GM12878 (cell line): ENCODE measurements at regions of chr16 and their contacts with region 1.

Region 1: DNA sequence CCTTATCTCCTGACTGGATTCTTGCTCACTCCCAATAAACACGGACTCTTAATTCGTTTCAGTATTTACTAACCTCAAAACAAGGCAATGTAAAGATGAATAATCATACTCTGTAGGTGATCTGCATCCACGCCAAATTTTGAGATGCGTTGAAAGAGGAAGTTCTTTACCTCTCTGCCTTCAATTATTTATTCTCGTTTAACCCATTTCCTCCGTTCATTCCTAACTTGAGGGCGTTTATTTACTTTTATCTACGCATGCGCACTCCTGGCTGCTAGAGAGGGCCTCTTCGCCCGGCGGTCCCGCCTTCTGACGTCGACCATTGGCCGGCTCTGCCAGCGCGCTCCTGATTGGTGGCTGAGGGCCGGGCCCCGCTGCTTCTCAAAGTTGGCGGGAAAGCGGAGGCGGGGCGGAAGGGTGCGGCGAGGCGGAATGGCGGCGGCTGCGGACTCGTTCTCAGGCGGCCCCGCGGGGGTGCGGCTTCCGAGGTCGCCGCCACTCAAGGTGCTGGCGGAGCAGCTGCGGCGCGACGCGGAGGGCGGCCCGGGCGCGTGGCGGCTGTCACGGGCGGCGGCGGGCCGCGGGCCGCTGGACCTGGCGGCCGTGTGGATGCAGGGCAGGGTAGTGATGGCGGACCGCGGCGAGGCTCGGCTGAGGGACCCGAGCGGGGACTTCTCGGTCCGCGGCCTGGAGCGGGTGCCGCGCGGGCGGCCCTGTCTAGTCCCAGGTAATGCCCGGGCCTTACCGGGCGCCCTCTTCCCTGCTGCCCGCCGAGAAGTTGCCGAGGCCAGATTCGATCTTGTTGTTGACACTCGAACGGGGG is at the start of gene RMI2:
- DNase-seq: peak; percentile 77
- ATAC-seq: peak; percentile 99
- H3K4me3 ChIP-seq: peak within 1 kb of the TSS; percentile 68
- H3K27ac ChIP-seq: peak within 1 kb of the TSS; percentile 57
- H3K4me1 ChIP-seq: peaks cover 6% of the 10 kb centered on the region
- H3K27me3 ChIP-seq: no peaks in the 10 kb centered on the region
- CTCF ChIP-seq: no peak
- EP300 ChIP-seq: no peak
- POLR2A ChIP-seq: peak; percentile 88
- RAD21 ChIP-seq: no peak
- polyA plus RNA-seq, gene RMI2: 9.6 to 21.7 TPM

Region 2: DNA sequence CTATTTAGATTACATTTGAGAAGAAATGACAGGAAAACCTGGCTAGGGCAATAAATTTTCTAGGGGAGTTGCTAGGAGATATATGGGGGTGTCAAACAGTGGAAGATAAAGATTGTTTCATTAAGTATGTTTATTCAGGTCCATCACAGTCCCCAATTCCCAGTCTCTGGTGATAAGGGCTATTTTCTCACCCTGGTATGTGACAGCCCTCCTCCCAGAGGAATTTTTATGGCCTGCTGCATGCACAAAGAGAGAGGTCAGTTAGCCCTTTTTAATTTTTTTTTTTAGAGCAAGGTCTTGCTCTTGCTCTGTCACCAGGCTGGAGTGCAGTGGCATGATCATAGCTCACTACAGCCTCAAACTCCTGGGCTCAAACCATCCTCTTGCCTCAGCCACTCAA is 1013.0 kb before region 1 on chr16:
- CTCF ChIA-PET with region 1: no interaction called
- POLR2A ChIA-PET with region 1: no interaction called
- RAD21 ChIA-PET with region 1: no interaction called
- SMC1A ChIA-PET with region 1: no interaction called
- in situ Hi-C with region 1: no loop called
- intact Hi-C with region 1: no loop called
- DNase-seq: no peak
- ATAC-seq: no peak
- H3K4me3 ChIP-seq: no peak overlapping the region
- H3K27ac ChIP-seq: no peak overlapping the region
- H3K4me1 ChIP-seq: 0 out of 2 replicates have a peak, but pooled peaks cover 3% of the 10 kb centered on the region
- H3K27me3 ChIP-seq: no peaks in the 10 kb centered on the region
- CTCF ChIP-seq: no peak
- EP300 ChIP-seq: no peak
- POLR2A ChIP-seq: no peak
- RAD21 ChIP-seq: no peak

Region 3: GRCh38 chr16:11268921-11269375 is 76.3 kb before region 1 on chr16 and contains the start of gene TNP2:
- CTCF ChIA-PET with region 1: no interaction called
- POLR2A ChIA-PET with region 1: no interaction called
- RAD21 ChIA-PET with region 1: no interaction called
- SMC1A ChIA-PET with region 1: no interaction called
- in situ Hi-C with region 1: no loop called
- intact Hi-C with region 1: no loop called
- DNase-seq: no peak
- ATAC-seq: no peak
- H3K4me3 ChIP-seq: no peak within 1 kb of the TSS
- H3K27ac ChIP-seq: no peak within 1 kb of the TSS
- H3K4me1 ChIP-seq: peaks cover 10% of the 10 kb centered on the region
- H3K27me3 ChIP-seq: no peaks in the 10 kb centered on the region
- CTCF ChIP-seq: no peak
- EP300 ChIP-seq: no peak
- POLR2A ChIP-seq: no peak
- RAD21 ChIP-seq: no peak
- polyA plus RNA-seq, gene TNP2: not detected

Region 4: GRCh38 chr16:11328172-11329070 is 16.8 kb before region 1 on chr16:
- CTCF ChIA-PET with region 1: interaction called, 4 read pairs
- POLR2A ChIA-PET with region 1: interaction called, 4 read pairs
- RAD21 ChIA-PET with region 1: interaction called, 5 read pairs
- SMC1A ChIA-PET with region 1: interaction called, 10 read pairs
- in situ Hi-C with region 1: no loop called
- intact Hi-C with region 1: no loop called
- DNase-seq: peak; percentile 95
- ATAC-seq: peak; percentile 84
- H3K4me3 ChIP-seq: peak overlapping the region; percentile 56
- H3K27ac ChIP-seq: peak overlapping the region; percentile 89
- H3K4me1 ChIP-seq: peaks cover 48% of the 10 kb centered on the region
- H3K27me3 ChIP-seq: no peaks in the 10 kb centered on the region
- CTCF ChIP-seq: peak in 2 of 3 experiments; percentile 4 to 6; a peak in 1 of 6 replicates
- EP300 ChIP-seq: peak; percentile 59 to 93
- POLR2A ChIP-seq: peak; percentile 78
- RAD21 ChIP-seq: peak; percentile 23; the same call in 1 of the 2 replicates